Common myeloid progenitor, CD34-positive (primary cell): ENCODE measurements at regions of chr7 and their contacts with region 1.

Region 1: GRCh38 chr7:104883718-104884452 is 130.1 kb upstream of the KMT2E start:
- DNase-seq: peak; percentile 86 to 95 (median 92)
- H3K4me3 ChIP-seq: peak overlapping the region in 2 of 7 experiments; percentile 14 to 23
- H3K27ac ChIP-seq: no peak overlapping the region
- H3K4me1 ChIP-seq: peaks cover 0 to 12% (median 11%) of the 10 kb centered on the region in 4 experiments
- H3K27me3 ChIP-seq: no peaks in the 10 kb centered on the region

Region 2: DNA sequence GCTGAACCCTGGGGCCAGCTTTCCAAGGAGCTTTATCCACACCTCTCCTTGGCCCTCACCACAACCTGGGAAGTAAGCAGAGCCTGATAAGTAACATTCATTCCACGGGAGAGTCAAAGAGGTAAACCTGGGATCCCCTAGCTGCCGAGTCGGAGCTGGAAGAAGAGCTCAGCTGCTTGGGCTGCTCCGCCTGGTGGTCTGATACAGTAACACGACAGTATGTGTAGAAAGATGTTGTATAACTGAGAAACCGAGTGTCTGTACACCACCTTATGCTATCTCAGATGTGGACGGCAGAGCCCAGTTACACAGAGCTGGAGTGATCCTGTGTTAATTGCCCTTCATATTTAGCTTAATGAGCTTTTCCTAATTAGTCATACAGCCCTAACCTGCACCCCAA is 21.2 kb before region 1 on chr7:
- CTCF ChIA-PET with region 1: interaction called, 23 read pairs
- POLR2A ChIA-PET with region 1: interaction called, 4 read pairs
- DNase-seq: peak in 1 of 3 donors; percentile 11
- H3K4me3 ChIP-seq: no peak overlapping the region
- H3K27ac ChIP-seq: no peak overlapping the region
- H3K4me1 ChIP-seq: peaks cover 12 to 27% (median 22%) of the 10 kb centered on the region in 4 experiments
- H3K27me3 ChIP-seq: no peaks in the 10 kb centered on the region

Region 3: GRCh38 chr7:104873346-104873849 is 10.5 kb before region 1 on chr7:
- CTCF ChIA-PET with region 1: interaction called, 14 read pairs
- POLR2A ChIA-PET with region 1: no interaction called
- DNase-seq: no peak
- H3K4me3 ChIP-seq: no peak overlapping the region
- H3K27ac ChIP-seq: no peak overlapping the region
- H3K4me1 ChIP-seq: no peaks in the 10 kb centered on the region
- H3K27me3 ChIP-seq: no peaks in the 10 kb centered on the region

Region 4: GRCh38 chr7:104895522-104896236 is 11.8 kb after region 1 on chr7:
- CTCF ChIA-PET with region 1: interaction called, 42 read pairs
- POLR2A ChIA-PET with region 1: interaction called, 5 read pairs
- DNase-seq: no peak
- H3K4me3 ChIP-seq: no peak overlapping the region
- H3K27ac ChIP-seq: no peak overlapping the region
- H3K4me1 ChIP-seq: peaks cover 6 to 18% (median 10%) of the 10 kb centered on the region in 4 experiments
- H3K27me3 ChIP-seq: no peaks in the 10 kb centered on the region

Region 5: GRCh38 chr7:104900525-104901239 is 16.8 kb after region 1 on chr7:
- CTCF ChIA-PET with region 1: interaction called, 42 read pairs
- POLR2A ChIA-PET with region 1: interaction called, 3 read pairs
- DNase-seq: no peak
- H3K4me3 ChIP-seq: no peak overlapping the region
- H3K27ac ChIP-seq: no peak overlapping the region
- H3K4me1 ChIP-seq: peaks cover 6 to 18% (median 10%) of the 10 kb centered on the region in 4 experiments
- H3K27me3 ChIP-seq: peaks cover 0 to under 1% (median 0%) of the 10 kb centered on the region in 5 experiments

Region 6: GRCh38 chr7:104908636-104909035 is 24.8 kb after region 1 on chr7:
- CTCF ChIA-PET with region 1: interaction called, 14 read pairs
- POLR2A ChIA-PET with region 1: no interaction called
- DNase-seq: no peak
- H3K4me3 ChIP-seq: no peak overlapping the region
- H3K27ac ChIP-seq: no peak overlapping the region
- H3K4me1 ChIP-seq: no peaks in the 10 kb centered on the region
- H3K27me3 ChIP-seq: peaks cover 0 to 2% (median 0%) of the 10 kb centered on the region in 5 experiments

Region 7: GRCh38 chr7:104923010-104923421 is 39.1 kb after region 1 on chr7:
- CTCF ChIA-PET with region 1: interaction called, 47 read pairs
- POLR2A ChIA-PET with region 1: no interaction called
- DNase-seq: peak; percentile 89 to 92 (median 90)
- H3K4me3 ChIP-seq: no peak overlapping the region
- H3K27ac ChIP-seq: no peak overlapping the region
- H3K4me1 ChIP-seq: peaks cover 0 to 6% (median 1%) of the 10 kb centered on the region in 4 experiments
- H3K27me3 ChIP-seq: no peaks in the 10 kb centered on the region

Region 8: DNA sequence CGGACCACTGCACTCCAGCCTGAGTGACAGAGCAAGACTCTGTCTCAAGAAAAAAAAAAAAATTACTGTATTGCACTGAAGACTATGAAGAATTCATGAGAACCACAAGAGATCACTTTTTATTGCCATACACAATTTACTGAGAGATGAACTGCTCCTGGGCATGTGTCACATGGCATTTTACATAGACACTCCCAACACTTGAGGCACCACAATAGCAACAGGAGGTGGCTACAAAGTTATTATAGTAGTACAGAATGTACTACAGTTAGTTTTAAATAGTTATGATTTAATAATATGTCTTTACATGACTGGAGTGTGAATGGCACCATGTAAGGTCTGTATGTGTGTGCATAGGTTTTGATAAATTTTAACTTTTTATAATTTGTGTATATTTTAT is 200.7 kb after region 1 on chr7:
- CTCF ChIA-PET with region 1: no interaction called
- POLR2A ChIA-PET with region 1: no interaction called
- DNase-seq: no peak
- H3K4me3 ChIP-seq: no peak overlapping the region
- H3K27ac ChIP-seq: no peak overlapping the region
- H3K4me1 ChIP-seq: no peaks in the 10 kb centered on the region
- H3K27me3 ChIP-seq: no peaks in the 10 kb centered on the region